BJ (cell line): ENCODE measurements at regions of chr15 and their contacts with region 1.

Region 1: DNA sequence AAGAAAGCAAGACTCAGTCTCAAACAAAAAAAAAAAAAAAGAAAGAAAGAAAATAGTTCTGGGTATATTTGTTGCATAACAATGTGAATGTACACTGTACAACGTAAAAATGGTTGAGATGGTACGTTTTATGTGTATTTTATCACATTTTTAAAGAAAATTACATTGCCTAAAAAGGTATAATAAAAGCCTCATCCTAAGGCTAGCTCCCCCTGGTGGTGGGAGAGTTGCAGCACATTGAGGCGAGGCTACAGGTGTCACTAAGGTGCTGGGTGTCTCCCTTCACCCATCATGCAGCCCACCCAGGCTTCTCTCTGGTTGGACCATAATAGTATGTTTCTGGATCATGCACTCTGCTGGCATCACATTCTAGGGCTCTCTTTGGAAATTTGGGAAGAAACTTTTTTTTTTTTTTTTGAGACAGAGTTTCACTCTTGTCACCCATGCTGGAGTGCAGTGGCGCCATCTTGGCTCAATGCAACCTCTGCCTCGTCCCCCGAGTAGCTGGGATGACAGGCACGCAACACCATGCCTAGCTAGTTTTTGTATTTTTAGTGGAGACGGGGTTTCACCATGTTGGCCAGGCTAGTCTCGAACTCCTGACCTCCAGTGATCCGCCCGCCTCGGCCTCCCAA is 12.4 kb upstream of the RAB11A start:
- DNase-seq: no peak
- H3K4me3 ChIP-seq: no peak overlapping the region
- H3K27me3 ChIP-seq: no peaks in the 10 kb centered on the region
- CTCF ChIP-seq: peak; percentile 89

Region 2: GRCh38 chr15:65638681-65639089 is 218.3 kb before region 1 on chr15:
- CTCF ChIA-PET with region 1: interaction called, 22 read pairs
- POLR2A ChIA-PET with region 1: no interaction called
- DNase-seq: peak; percentile 31
- H3K4me3 ChIP-seq: no peak overlapping the region
- H3K27me3 ChIP-seq: no peaks in the 10 kb centered on the region
- CTCF ChIP-seq: peak; percentile 79

Region 3: GRCh38 chr15:65832549-65833364 is 24.2 kb before region 1 on chr15:
- CTCF ChIA-PET with region 1: interaction called, 18 read pairs
- POLR2A ChIA-PET with region 1: no interaction called
- DNase-seq: peak; percentile 65
- H3K4me3 ChIP-seq: no peak overlapping the region
- H3K27me3 ChIP-seq: no peaks in the 10 kb centered on the region
- CTCF ChIP-seq: peak; percentile 36

Region 4: DNA sequence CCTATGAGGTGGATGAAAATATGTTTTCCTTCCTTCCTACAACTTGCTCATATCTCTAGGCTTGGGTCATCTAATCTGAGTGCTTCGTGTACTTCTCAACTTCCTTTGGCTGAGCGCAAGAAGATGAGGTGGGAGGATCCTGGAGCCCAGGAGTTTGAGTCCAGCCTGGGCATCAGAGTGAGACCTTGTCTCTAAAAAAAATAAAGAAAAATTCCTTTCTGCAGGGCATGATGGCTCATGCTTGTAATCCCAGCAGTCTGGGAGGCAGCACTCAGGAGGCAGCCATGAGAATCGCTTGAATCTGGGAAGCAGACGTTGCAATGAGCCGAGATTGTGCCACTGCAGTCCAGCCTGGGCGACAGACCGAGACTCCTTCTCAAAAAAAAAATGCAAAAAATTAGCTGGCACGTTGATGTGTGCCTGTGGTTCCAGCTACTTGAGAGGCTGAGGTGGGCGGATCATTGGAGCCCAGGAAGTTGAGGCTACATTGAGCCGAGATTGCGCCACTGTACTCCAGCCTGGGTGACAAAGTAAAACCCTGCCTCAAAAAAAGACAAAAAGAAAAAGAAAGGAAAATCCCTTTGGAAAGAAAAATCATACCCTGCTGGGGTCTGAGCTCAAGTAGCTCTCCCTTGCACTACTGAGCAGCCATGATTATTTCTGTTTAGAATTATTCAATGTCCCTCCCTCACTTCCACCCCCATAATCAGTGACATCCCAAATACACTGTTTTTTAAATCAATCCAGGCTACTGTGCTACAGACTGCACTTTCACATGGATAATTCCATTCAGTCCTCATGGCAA is 15.6 kb before region 1 on chr15:
- CTCF ChIA-PET with region 1: interaction called, 14 read pairs
- POLR2A ChIA-PET with region 1: no interaction called
- DNase-seq: no peak
- H3K4me3 ChIP-seq: peak overlapping the region; percentile 1; the same call in 1 of the 2 replicates
- H3K27me3 ChIP-seq: no peaks in the 10 kb centered on the region
- CTCF ChIP-seq: no peak

Region 5: GRCh38 chr15:65869127-65869953 is 12.4 kb after region 1 on chr15 and contains the start of gene RAB11A:
- CTCF ChIA-PET with region 1: interaction called, 46 read pairs
- POLR2A ChIA-PET with region 1: no interaction called
- DNase-seq: peak; percentile 72
- H3K4me3 ChIP-seq: peak within 1 kb of the TSS; percentile 99
- H3K27me3 ChIP-seq: no peaks in the 10 kb centered on the region
- CTCF ChIP-seq: peak; percentile 48
- polyA plus RNA-seq, gene RAB11A: 165 and 243 TPM in 2 replicates

Region 6: GRCh38 chr15:65885668-65886218 is 28.8 kb after region 1 on chr15:
- CTCF ChIA-PET with region 1: no interaction called
- POLR2A ChIA-PET with region 1: no interaction called
- DNase-seq: no peak
- H3K4me3 ChIP-seq: no peak overlapping the region
- H3K27me3 ChIP-seq: no peaks in the 10 kb centered on the region
- CTCF ChIP-seq: no peak